ENCODE measurements at regions of chr11 and their contacts with region 1.

Region 1: GRCh38 chr11:66638177-66639065 is at the start of gene RBM4:
- DNase-seq: peak; percentile 80 to 99 (median 98)
- ATAC-seq: peak; percentile 93
- H3K4me3 ChIP-seq: peak within 1 kb of the TSS; percentile 91
- H3K4me3 Mint-ChIP-seq: peak within 1 kb of the TSS; percentile 92 to 100 (median 94)
- H3K27ac ChIP-seq: peak within 1 kb of the TSS; percentile 93
- H3K27ac Mint-ChIP-seq: peak within 1 kb of the TSS; percentile 87 to 98 (median 96)
- H3K4me1 ChIP-seq: peaks cover 44 to 48% of the 10 kb centered on the region in 2 donors
- H3K4me1 Mint-ChIP-seq: peaks cover 45 to 73% (median 68%) of the 10 kb centered on the region in 7 donors
- H3K27me3 ChIP-seq: no peaks in the 10 kb centered on the region
- H3K27me3 Mint-ChIP-seq: no peaks in the 10 kb centered on the region
- total RNA-seq, gene RBM4: 139 to 239 (median 198) TPM

Region 2: DNA sequence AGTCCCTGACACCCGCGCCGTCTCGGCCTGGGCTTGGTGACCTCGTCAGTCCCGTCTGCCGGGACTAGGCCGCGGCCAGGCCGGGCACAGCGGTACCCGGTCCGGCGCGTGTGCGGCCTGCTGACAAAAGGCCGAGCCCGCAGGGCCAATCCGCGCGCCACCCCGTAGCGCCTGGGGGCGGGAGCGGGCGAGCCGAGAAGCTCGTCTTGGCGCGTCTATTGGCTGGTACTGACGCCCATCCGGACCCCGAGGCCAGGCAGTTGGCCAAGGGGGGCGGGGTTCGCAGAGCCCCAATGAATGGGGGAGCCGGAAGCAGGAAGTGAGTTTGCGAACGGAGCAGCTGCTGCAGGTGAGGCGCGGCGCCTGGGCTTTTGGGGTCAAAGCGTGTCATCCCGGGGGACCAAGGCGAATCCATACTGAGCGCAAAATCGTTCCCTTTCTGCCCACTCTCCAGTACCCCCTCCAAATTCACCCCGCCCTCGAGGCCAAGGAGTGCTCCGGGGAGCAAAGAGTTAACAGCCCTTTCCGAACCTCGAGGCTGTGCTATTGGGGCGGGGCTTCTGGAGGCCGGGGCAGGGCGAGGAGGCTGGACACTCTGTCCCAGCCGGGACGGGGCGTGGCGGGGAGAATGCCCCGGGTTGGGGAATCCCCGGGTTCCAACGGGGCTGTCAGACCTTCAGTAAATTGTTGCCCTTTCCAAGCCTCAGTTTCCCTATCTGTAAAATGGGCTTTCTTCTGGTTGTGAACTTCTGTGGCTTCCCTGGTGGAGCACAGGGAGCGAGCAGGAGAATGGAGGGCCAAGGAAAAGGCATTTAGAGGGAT is 158.1 kb before region 1 on chr11 and contains the start of gene DPP3:
- CTCF ChIA-PET with region 1: no interaction called
- POLR2A ChIA-PET with region 1: interaction called, 7 read pairs
- intact Hi-C with region 1: loop called (anchors 1 kb)
- DNase-seq: peak; percentile 87 to 97 (median 95)
- ATAC-seq: peak; percentile 99
- H3K4me3 ChIP-seq: peak within 1 kb of the TSS; percentile 86
- H3K4me3 Mint-ChIP-seq: peak within 1 kb of the TSS; percentile 86 to 92 (median 90)
- H3K27ac ChIP-seq: peak within 1 kb of the TSS; percentile 90
- H3K27ac Mint-ChIP-seq: peak within 1 kb of the TSS; percentile 75 to 91 (median 90)
- H3K4me1 ChIP-seq: peaks cover 9 to 14% of the 10 kb centered on the region in 2 donors
- H3K4me1 Mint-ChIP-seq: peaks cover 9 to 37% (median 17%) of the 10 kb centered on the region in 7 donors
- H3K27me3 ChIP-seq: no peaks in the 10 kb centered on the region
- H3K27me3 Mint-ChIP-seq: no peaks in the 10 kb centered on the region
- total RNA-seq, gene DPP3: 15.8 to 75.7 (median 19.4) TPM

Region 3: GRCh38 chr11:66579017-66579606 is 59.3 kb before region 1 on chr11:
- CTCF ChIA-PET with region 1: interaction called, 4 read pairs
- POLR2A ChIA-PET with region 1: interaction called, 3 read pairs
- intact Hi-C with region 1: loop called in 1 of 2 experiments (anchors 2 kb)
- DNase-seq: peak; percentile 51 to 78 (median 66)
- ATAC-seq: peak; percentile 91
- H3K4me3 ChIP-seq: no peak overlapping the region
- H3K4me3 Mint-ChIP-seq: peak overlapping the region in 2 of 10 donors; percentile 22 to 53
- H3K27ac ChIP-seq: no peak overlapping the region
- H3K27ac Mint-ChIP-seq: peak overlapping the region in 2 of 9 donors; percentile 65 to 71
- H3K4me1 ChIP-seq: peaks cover 0 to 6% of the 10 kb centered on the region in 2 donors
- H3K4me1 Mint-ChIP-seq: peaks cover 0 to 11% (median 8%) of the 10 kb centered on the region in 7 donors
- H3K27me3 ChIP-seq: no peaks in the 10 kb centered on the region
- H3K27me3 Mint-ChIP-seq: peaks cover 0 to 25% (median 15%) of the 10 kb centered on the region in 5 donors

Region 4: GRCh38 chr11:66653123-66653522 is 14.7 kb after region 1 on chr11:
- CTCF ChIA-PET with region 1: interaction called, 3 read pairs
- POLR2A ChIA-PET with region 1: interaction called, 19 read pairs
- intact Hi-C with region 1: loop called in 1 of 2 experiments (anchors 2 kb)
- DNase-seq: no peak
- ATAC-seq: no peak
- H3K4me3 ChIP-seq: no peak overlapping the region
- H3K4me3 Mint-ChIP-seq: no peak overlapping the region
- H3K27ac ChIP-seq: no peak overlapping the region
- H3K27ac Mint-ChIP-seq: peak overlapping the region in 6 of 9 donors; percentile 38 to 76 (median 50)
- H3K4me1 ChIP-seq: no peaks in the 10 kb centered on the region
- H3K4me1 Mint-ChIP-seq: peaks cover 12 to 49% (median 39%) of the 10 kb centered on the region in 7 donors
- H3K27me3 ChIP-seq: no peaks in the 10 kb centered on the region
- H3K27me3 Mint-ChIP-seq: no peaks in the 10 kb centered on the region

Region 5: DNA sequence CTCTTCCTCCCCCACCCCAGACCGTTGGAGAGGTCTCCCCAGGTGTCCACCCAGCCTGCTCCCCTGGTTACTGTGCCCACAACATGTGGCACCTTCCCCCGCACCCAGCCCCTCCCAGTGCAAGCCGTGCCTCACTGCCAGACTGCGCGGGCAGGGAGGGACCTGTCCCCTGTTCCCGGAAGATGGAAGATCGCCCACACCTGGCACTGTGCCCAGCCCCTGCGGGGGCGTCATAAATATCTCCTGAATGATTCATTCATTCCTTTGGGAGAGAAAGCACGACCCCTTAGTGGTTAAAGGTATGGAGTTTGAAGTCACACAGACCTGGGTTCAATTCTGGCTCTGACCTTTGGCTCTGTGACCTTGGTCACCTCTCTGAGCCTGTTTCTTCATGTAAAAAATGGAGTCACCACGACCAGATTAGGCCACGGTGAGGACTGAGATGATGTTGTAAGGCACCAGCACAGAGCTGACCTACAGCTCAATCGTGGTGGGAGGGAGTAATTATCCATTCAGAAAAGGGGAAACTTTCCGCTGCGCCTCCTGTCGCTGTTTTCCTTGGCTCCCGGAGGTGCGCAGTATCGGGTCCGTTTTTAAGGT is 384.0 kb after region 1 on chr11:
- CTCF ChIA-PET with region 1: no interaction called
- POLR2A ChIA-PET with region 1: no interaction called
- intact Hi-C with region 1: no loop called
- DNase-seq: no peak
- ATAC-seq: no peak
- H3K4me3 ChIP-seq: no peak overlapping the region
- H3K4me3 Mint-ChIP-seq: peak overlapping the region in 9 of 10 donors; percentile 23 to 91 (median 68)
- H3K27ac ChIP-seq: no peak overlapping the region
- H3K27ac Mint-ChIP-seq: no peak overlapping the region
- H3K4me1 ChIP-seq: peaks cover 24 to 31% of the 10 kb centered on the region in 2 donors
- H3K4me1 Mint-ChIP-seq: peaks cover 4 to 32% (median 24%) of the 10 kb centered on the region in 7 donors
- H3K27me3 ChIP-seq: peaks cover 9 to 18% of the 10 kb centered on the region in 2 donors
- H3K27me3 Mint-ChIP-seq: peaks cover 16 to 65% (median 35%) of the 10 kb centered on the region in 5 donors

Measured in naive thymus-derived CD4-positive, alpha-beta T cell (primary cell).